Psoas muscle (tissue), 8 donors: ENCODE measurements at regions of chr12 and their contacts with region 1.

Region 1: GRCh38 chr12:95117178-95117599 is 43.8 kb upstream of the NR2C1 start:
- DNase-seq: no peak
- ATAC-seq: peak; percentile 72 to 94 (median 82)
- H3K4me3 ChIP-seq: no peak overlapping the region
- H3K27ac ChIP-seq: no peak overlapping the region
- H3K4me1 ChIP-seq: peaks cover 5% of the 10 kb centered on the region
- H3K27me3 ChIP-seq: no peaks in the 10 kb centered on the region
- CTCF ChIP-seq: peak; percentile 83

Region 2: DNA sequence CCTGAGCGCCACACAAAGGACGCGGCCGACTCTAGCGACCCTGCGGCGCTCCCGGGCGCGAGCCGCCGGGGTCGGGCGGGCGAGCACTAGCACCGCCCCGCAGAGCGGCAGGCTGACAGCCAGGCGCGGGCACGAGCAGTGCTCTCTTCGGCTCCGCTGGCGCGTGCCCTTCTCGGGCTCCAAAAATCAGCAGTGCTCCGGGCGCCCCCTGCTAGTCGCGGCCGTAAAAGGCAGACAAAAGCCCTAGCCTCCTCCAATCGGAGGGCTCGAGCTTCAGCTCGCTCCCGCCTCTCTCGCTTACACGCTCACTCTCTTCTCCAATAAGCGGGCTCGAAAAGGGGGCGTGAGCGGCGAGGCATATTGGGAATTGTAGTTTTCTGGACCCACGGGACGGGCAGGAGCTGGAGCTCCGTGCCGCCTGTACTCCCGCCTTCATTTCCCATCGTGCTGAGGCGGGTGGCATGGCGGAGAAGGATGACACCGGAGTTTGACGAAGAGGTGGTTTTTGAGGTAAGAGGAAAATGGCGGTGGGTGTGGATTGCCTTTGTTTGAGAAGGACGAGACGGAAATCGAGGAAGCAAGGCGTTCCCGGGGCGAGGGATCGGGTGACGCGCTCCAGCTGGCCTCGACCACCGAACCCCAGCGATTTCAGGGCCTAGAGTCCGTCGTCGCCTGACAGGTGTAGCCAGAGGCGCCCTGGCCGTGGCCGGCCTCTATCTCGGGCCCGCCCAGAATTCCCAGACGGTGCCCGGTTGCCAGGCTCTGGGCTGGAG is 100.4 kb after region 1 on chr12 and contains the starts of genes FGD6 and VEZT:
- intact Hi-C with region 1: loop called in 1 of 2 experiments (anchors 5 kb)
- DNase-seq: peak; percentile 99
- ATAC-seq: peak; percentile 92 to 95 (median 94)
- H3K4me3 ChIP-seq: peak within 1 kb of the TSS; percentile 88
- H3K27ac ChIP-seq: peak within 1 kb of the TSS; percentile 91
- H3K4me1 ChIP-seq: peaks cover 41% of the 10 kb centered on the region
- H3K27me3 ChIP-seq: no peaks in the 10 kb centered on the region
- CTCF ChIP-seq: peak; percentile 57
- total RNA-seq, gene FGD6: 2.5 to 7.1 (median 4.4) TPM
- total RNA-seq, gene VEZT: 74.4 to 121 (median 95.3) TPM

Region 3: DNA sequence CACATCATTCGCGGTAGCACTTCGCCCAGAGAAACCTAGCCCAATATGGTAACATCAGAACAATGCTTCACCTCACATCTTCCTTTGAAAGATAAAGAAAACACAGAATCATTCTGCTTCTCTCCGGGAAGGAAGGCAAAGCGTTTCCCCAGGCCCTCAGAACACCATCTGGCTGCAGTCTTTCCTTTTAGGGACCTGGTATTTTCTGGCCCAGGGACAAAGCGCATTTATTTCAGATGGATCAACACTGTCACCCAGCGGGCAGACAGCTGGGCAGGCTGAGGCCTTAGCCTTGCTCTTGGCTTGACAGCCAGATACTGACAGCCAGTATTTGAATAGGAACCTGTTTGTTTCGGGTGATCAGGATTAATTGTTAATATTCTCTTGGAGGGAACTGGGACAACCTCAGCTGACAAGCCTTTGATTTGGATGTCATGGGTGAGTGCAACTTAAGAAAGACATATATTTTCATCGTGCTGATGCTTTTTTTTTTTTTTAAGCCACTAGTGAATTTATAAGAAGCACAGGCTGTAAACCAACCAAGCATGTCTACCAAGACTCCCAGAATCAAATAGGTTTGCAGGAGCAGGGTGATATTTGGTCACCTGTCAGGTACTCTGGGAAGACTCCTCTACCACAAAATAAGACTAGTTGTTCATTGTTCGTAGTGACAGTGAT is 219.3 kb after region 1 on chr12:
- intact Hi-C with region 1: loop called (anchors 1 to 2 kb)
- DNase-seq: peak; percentile 41 to 79
- ATAC-seq: peak; percentile 88 to 97 (median 92)
- H3K4me3 ChIP-seq: peak overlapping the region; percentile 39
- H3K27ac ChIP-seq: peak overlapping the region; percentile 39
- H3K4me1 ChIP-seq: peaks cover 5% of the 10 kb centered on the region
- H3K27me3 ChIP-seq: no peaks in the 10 kb centered on the region
- CTCF ChIP-seq: peak; percentile 92

Region 4: GRCh38 chr12:95532851-95533250 is 415.7 kb after region 1 on chr12:
- intact Hi-C with region 1: loop called (anchors 1 to 5 kb)
- DNase-seq: no peak
- ATAC-seq: no peak
- H3K4me3 ChIP-seq: no peak overlapping the region
- H3K27ac ChIP-seq: no peak overlapping the region
- H3K4me1 ChIP-seq: no peaks in the 10 kb centered on the region
- H3K27me3 ChIP-seq: no peaks in the 10 kb centered on the region
- CTCF ChIP-seq: no peak

Region 5: DNA sequence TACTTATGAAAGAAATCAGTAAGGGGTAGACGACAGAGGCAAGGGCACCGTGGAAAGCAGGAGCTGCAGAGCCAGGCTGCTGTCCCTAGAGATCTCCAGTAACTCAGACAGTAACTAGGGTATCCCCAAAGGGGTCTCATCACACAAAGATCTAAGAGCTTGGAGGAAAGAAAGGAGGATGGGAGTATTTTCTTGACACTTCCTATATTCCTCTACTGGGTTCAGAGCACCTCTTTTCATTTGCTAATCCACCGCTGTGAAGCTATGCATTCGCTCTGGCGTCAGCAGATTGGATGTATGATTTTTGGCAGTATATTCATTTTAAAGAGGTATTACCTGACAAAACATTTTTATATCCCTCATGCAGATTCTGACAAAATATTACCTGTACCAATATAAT is 421.5 kb after region 1 on chr12:
- intact Hi-C with region 1: loop called (anchors 1 to 5 kb)
- DNase-seq: no peak
- ATAC-seq: no peak
- H3K4me3 ChIP-seq: no peak overlapping the region
- H3K27ac ChIP-seq: no peak overlapping the region
- H3K4me1 ChIP-seq: no peaks in the 10 kb centered on the region
- H3K27me3 ChIP-seq: no peaks in the 10 kb centered on the region
- CTCF ChIP-seq: no peak